ENCODE measurements at regions of chr17 and their contacts with region 1.

Region 1: DNA sequence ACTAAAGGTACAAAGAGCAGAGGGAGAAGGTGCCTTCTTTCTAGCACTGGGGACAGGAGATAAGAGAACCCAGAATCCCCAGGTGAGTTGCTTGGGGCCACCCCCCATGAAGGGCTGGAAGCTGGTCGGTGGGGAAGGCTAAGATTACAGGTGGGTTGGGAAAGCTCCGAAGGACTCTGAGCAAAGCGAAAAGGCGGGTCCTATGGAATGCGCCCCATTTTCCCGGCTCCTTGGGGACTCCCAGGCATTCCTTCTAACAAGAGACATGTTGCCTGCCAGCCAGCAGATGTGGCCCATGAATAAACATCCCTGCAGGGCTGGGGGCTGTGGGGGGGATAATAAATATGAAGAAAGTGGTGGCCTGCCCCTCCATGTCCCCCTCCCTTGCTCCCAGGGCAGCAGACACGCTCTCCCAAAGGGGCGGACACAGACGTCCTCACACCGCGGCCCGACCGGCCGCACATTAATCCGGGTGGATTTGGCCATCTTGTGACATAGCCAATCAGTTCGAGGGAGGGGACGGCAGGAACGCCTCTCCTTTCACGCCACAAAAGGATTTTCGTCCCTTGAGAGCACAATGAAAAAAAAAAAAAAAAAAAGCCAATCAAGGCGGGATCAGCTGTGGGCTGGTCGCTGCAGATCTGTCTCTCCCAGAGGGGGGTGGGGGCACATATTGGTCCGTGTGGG is 98.5 kb downstream of the SOX9 start:
- H3K4me3 ChIP-seq: no peak overlapping the region
- H3K27ac ChIP-seq: no peak overlapping the region
- H3K4me1 ChIP-seq: no peaks in the 10 kb centered on the region
- CTCF ChIP-seq: no peak

Region 2: GRCh38 chr17:73247726-73248125 is 1028.4 kb after region 1 on chr17:
- CTCF ChIA-PET with region 1: no interaction called
- POLR2A ChIA-PET with region 1: interaction called, 10 read pairs
- H3K4me3 ChIP-seq: no peak overlapping the region
- H3K27ac ChIP-seq: no peak overlapping the region
- H3K4me1 ChIP-seq: no peaks in the 10 kb centered on the region
- CTCF ChIP-seq: no peak

Measured in HEK293 (cell line).